ENCODE measurements at regions of chr11 and their contacts with region 1.

Region 1: DNA sequence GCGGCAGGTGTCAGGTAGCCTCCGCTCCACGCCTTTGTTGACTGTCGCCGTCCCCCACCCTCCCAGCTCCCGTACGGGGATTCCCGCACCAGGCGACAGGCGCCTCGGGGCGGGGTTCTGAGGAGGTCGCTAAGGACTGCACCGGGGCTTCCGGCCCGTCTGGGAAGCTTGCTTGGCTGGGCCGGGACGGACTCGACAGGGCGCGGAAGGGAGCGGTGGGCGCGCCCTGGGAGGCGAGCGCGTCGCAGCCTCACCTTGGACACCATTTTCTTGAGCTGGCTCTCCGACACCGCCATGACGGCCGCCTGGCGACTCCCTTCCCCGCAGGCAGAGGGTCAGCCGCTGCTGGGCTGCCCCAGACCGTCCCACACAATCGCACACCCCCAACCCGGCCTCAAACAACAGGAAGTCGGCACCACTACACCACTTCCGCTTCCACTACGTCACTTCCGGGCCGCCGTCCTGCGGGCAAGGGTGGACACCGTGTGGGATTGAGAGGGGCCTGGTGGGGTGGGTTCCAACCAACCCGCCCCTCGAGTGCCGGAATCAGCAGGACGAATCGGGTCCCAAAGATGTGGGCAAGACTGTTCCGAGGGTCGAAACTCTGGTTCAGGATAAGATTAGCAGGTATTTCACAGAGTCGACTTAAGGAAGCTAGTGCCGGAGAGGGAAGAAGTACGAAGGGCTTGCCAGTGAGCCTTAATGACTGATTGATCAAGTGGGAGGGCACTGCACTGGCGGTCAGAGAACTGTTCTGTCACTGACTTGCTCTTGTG is at the start of gene TSG101:
- DNase-seq: peak; percentile 86 to 96 (median 91)
- ATAC-seq: peak; percentile 91
- H3K4me3 ChIP-seq: peak within 1 kb of the TSS; percentile 94
- H3K4me3 Mint-ChIP-seq: peak within 1 kb of the TSS; percentile 93 to 100 (median 100)
- H3K27ac ChIP-seq: peak within 1 kb of the TSS; percentile 96
- H3K27ac Mint-ChIP-seq: peak within 1 kb of the TSS; percentile 99 to 100 (median 100)
- H3K4me1 ChIP-seq: peaks cover 18% of the 10 kb centered on the region in 2 donors
- H3K4me1 Mint-ChIP-seq: peaks cover 28 to 67% (median 55%) of the 10 kb centered on the region in 7 donors
- H3K27me3 ChIP-seq: no peaks in the 10 kb centered on the region
- H3K27me3 Mint-ChIP-seq: peaks cover 0 to 3% (median 0%) of the 10 kb centered on the region in 5 donors
- total RNA-seq, gene TSG101: 16.8 to 46.3 (median 36.3) TPM

Region 2: GRCh38 chr11:16738193-16738946 is 1788.3 kb before region 1 on chr11 and contains the start of gene C11orf58:
- CTCF ChIA-PET with region 1: no interaction called
- POLR2A ChIA-PET with region 1: no interaction called
- intact Hi-C with region 1: loop called in 1 of 2 experiments (anchors 5 kb)
- DNase-seq: peak; percentile 87 to 98 (median 97)
- ATAC-seq: peak; percentile 97
- H3K4me3 ChIP-seq: peak within 1 kb of the TSS; percentile 92
- H3K4me3 Mint-ChIP-seq: peak within 1 kb of the TSS in 5 of 10 donors; percentile 72 to 87 (median 77)
- H3K27ac ChIP-seq: peak within 1 kb of the TSS; percentile 98
- H3K27ac Mint-ChIP-seq: peak within 1 kb of the TSS in 2 of 9 donors; percentile 83 to 97
- H3K4me1 ChIP-seq: peaks cover 28 to 33% of the 10 kb centered on the region in 2 donors
- H3K4me1 Mint-ChIP-seq: peaks cover 6 to 32% (median 21%) of the 10 kb centered on the region in 7 donors
- H3K27me3 ChIP-seq: no peaks in the 10 kb centered on the region
- H3K27me3 Mint-ChIP-seq: peaks cover 0 to 3% (median 0%) of the 10 kb centered on the region in 5 donors
- total RNA-seq, gene C11orf58: 116 to 168 (median 155) TPM

Region 3: DNA sequence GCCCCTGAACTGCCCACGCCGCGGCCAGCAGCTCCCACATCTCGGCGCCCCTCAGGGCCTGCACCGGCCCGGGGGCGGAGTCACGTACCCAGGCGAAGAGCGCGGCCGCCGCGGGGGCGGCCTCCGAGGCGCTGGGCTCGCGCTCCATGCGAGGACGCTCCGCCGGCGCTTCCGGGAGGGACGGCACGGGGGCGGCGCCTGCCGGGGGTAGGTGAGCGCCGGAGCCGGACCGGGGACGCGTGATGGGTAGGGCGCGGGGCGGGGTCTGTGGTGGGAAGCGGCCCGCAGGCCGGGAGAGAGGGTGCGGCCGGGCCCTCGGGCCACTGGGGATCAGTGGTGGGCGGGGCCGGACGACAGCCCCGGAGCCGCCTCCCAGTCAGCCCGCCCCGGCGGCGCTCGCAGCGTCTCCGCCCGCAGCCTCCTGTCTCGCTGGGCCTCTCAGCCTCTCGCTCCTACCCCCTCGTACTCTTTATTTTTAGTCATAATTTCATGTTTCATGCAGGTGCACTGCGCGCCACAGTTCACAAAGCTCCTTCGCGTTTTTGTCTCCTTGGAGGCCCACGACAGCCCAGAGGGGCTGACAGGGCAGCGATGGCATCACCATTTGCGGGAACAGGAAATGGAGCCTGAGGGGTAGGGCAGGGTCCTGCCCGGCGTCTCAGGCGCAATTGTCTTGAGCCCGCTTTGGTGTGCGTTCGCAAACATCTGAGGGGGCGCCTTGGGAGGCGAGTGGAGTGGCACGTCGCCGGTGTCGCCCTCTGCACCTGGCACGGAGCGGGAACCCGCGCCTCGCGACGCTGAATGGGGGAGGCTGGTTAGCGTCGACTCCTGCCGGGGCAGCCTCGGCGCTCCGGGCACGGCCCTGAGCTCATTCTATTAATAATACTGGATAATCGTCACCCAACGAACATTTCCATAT is 513.6 kb before region 1 on chr11 and contains the start of gene SERGEF:
- CTCF ChIA-PET with region 1: interaction called, 4 read pairs
- POLR2A ChIA-PET with region 1: interaction called, 4 read pairs
- intact Hi-C with region 1: loop called (anchors 1 kb)
- DNase-seq: peak; percentile 81 to 96 (median 87)
- ATAC-seq: peak; percentile 93
- H3K4me3 ChIP-seq: peak within 1 kb of the TSS; percentile 85
- H3K4me3 Mint-ChIP-seq: peak within 1 kb of the TSS; percentile 93 to 100 (median 98)
- H3K27ac ChIP-seq: peak within 1 kb of the TSS; percentile 84
- H3K27ac Mint-ChIP-seq: peak within 1 kb of the TSS; percentile 89 to 99 (median 99)
- H3K4me1 ChIP-seq: peaks cover 10% of the 10 kb centered on the region in 2 donors
- H3K4me1 Mint-ChIP-seq: peaks cover 17 to 47% (median 37%) of the 10 kb centered on the region in 7 donors
- H3K27me3 ChIP-seq: no peaks in the 10 kb centered on the region
- H3K27me3 Mint-ChIP-seq: no peaks in the 10 kb centered on the region
- total RNA-seq, gene SERGEF: 35.0 to 57.7 (median 52.9) TPM

Region 4: DNA sequence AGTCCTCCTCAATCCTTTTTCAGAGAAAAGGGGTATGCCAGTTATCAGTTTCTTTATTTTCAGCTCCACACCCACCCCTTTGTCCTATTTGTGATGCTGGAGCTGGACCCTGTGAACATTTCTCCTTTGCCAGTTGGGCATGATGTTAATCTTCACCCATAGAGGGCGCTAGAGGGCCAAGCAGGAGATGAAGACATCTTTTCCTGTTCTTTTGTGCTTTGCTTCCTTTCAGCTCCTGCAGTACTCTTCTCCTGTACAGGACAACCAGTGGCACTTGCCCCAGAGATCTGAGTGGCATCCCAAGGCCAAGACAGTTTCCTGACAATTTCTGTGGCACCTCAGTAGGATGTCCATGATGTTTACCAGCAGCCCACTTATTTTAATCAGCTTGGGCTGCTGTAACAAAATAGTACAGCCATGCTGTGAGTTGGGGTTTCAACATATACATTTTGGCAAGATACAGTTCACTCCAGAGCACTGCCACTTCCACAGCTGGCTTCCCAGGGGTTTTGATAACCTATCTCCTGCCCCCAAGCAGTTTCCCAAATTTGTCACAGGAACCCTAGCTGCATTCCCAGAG is 282.8 kb before region 1 on chr11:
- CTCF ChIA-PET with region 1: no interaction called
- POLR2A ChIA-PET with region 1: no interaction called
- intact Hi-C with region 1: loop called in 1 of 2 experiments (anchors 2 kb)
- DNase-seq: peak in 8 of 9 donors; percentile 15 to 63 (median 50)
- ATAC-seq: peak; percentile 80
- H3K4me3 ChIP-seq: no peak overlapping the region
- H3K4me3 Mint-ChIP-seq: no peak overlapping the region
- H3K27ac ChIP-seq: no peak overlapping the region
- H3K27ac Mint-ChIP-seq: no peak overlapping the region
- H3K4me1 ChIP-seq: no peaks in the 10 kb centered on the region
- H3K4me1 Mint-ChIP-seq: peaks cover 0 to 32% (median 0%) of the 10 kb centered on the region in 7 donors
- H3K27me3 ChIP-seq: no peaks in the 10 kb centered on the region
- H3K27me3 Mint-ChIP-seq: peaks cover 6 to 37% (median 16%) of the 10 kb centered on the region in 5 donors

Region 5: DNA sequence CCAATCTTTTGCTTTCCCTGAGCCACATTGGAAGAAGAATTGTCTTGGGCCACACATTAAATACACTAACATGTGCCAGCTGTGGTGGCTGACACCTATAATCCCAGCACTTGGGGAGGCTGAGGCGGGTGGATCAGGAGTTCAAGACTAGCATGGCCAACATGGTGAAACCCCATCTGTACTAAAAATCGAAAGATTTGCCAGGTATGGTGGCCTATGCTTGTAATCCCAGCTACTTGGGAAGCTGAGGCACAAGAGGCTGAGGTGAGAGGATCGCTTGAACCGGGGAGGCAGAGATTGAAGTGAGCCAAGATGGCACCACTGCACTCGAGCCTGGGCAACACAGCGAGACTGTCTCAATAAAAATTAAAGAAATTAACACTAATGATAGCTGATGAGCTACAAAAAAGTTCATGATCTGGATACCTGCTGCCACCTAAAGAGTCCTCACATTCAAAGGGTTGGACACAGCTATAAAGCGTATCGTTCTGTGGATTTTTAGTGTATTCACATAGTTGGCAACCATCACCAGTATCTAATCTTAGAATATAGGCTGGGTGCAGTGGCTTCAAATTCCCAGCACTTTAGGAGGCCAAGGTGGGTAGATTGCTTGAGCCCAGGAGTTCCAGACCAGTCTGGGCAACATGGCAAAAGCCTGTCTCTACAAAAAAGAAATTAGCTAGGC is 118.0 kb before region 1 on chr11:
- CTCF ChIA-PET with region 1: interaction called, 3 read pairs
- POLR2A ChIA-PET with region 1: no interaction called
- intact Hi-C with region 1: loop called in 1 of 2 experiments (anchors 5 kb)
- DNase-seq: no peak
- ATAC-seq: peak; percentile 39
- H3K4me3 ChIP-seq: no peak overlapping the region
- H3K4me3 Mint-ChIP-seq: no peak overlapping the region
- H3K27ac ChIP-seq: no peak overlapping the region
- H3K27ac Mint-ChIP-seq: no peak overlapping the region
- H3K4me1 ChIP-seq: no peaks in the 10 kb centered on the region
- H3K4me1 Mint-ChIP-seq: peaks cover 5 to 22% (median 12%) of the 10 kb centered on the region in 7 donors
- H3K27me3 ChIP-seq: no peaks in the 10 kb centered on the region
- H3K27me3 Mint-ChIP-seq: no peaks in the 10 kb centered on the region

Region 6: DNA sequence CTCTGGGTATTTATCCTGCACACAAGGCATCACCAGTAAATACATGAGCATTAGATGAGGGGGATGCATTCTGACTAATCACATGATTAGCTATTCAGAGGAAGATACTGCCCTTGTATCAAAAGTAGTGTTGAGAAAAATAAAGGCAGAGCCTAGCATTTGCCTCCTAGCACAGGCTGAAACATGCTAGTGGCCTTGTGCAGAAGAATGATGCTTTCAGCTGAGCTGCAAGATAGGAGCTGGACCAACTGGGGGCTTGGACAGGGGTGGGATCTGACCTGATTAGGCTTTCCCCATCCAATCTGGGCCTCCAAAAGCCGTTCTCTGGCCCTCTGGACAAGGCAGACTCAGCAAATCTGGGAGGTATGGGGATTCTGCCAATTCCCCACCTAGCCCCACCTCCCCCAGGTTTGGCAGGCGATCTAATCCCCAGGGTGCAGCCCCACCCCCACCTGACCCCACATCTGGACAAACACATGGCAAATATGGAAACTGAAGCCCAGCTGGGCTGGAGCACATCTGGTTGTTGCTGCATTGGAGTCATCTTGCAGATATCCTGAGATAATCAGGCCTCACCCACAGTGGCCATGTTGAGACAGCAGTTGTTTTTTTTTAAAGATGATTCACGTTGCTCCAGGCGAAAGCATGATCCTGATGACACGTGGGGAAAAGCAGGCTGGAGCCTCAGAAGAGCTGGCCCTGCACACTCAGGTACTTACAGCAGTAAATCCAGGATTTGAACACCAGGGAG is 68.5 kb after region 1 on chr11:
- CTCF ChIA-PET with region 1: no interaction called
- POLR2A ChIA-PET with region 1: no interaction called
- intact Hi-C with region 1: no loop called
- DNase-seq: no peak
- ATAC-seq: no peak
- H3K4me3 ChIP-seq: no peak overlapping the region
- H3K4me3 Mint-ChIP-seq: no peak overlapping the region
- H3K27ac ChIP-seq: no peak overlapping the region
- H3K27ac Mint-ChIP-seq: no peak overlapping the region
- H3K4me1 ChIP-seq: peaks cover 0 to 4% of the 10 kb centered on the region in 2 donors
- H3K4me1 Mint-ChIP-seq: peaks cover 0 to 16% (median 0%) of the 10 kb centered on the region in 7 donors
- H3K27me3 ChIP-seq: no peaks in the 10 kb centered on the region
- H3K27me3 Mint-ChIP-seq: no peaks in the 10 kb centered on the region

Region 7: GRCh38 chr11:18615628-18616392 is 89.1 kb after region 1 on chr11:
- CTCF ChIA-PET with region 1: no interaction called
- POLR2A ChIA-PET with region 1: interaction called, 3 read pairs
- intact Hi-C with region 1: loop called in 1 of 2 experiments (anchors 1 kb)
- DNase-seq: no peak
- ATAC-seq: peak; percentile 44
- H3K4me3 ChIP-seq: no peak overlapping the region
- H3K4me3 Mint-ChIP-seq: peak overlapping the region in 1 of 10 donors; percentile 71
- H3K27ac ChIP-seq: no peak overlapping the region
- H3K27ac Mint-ChIP-seq: peak overlapping the region in 3 of 9 donors; percentile 26 to 72 (median 28)
- H3K4me1 ChIP-seq: peaks cover 21 to 29% of the 10 kb centered on the region in 2 donors
- H3K4me1 Mint-ChIP-seq: peaks cover 26 to 59% (median 47%) of the 10 kb centered on the region in 7 donors
- H3K27me3 ChIP-seq: no peaks in the 10 kb centered on the region
- H3K27me3 Mint-ChIP-seq: no peaks in the 10 kb centered on the region

Region 8: GRCh38 chr11:18684267-18684666 is 157.6 kb after region 1 on chr11:
- CTCF ChIA-PET with region 1: no interaction called
- POLR2A ChIA-PET with region 1: no interaction called
- intact Hi-C with region 1: no loop called
- DNase-seq: no peak
- ATAC-seq: no peak
- H3K4me3 ChIP-seq: no peak overlapping the region
- H3K4me3 Mint-ChIP-seq: no peak overlapping the region
- H3K27ac ChIP-seq: no peak overlapping the region
- H3K27ac Mint-ChIP-seq: peak overlapping the region in 1 of 9 donors; percentile 16
- H3K4me1 ChIP-seq: peaks cover 0 to under 1% of the 10 kb centered on the region in 2 donors
- H3K4me1 Mint-ChIP-seq: peaks cover 0 to 9% (median 5%) of the 10 kb centered on the region in 7 donors
- H3K27me3 ChIP-seq: no peaks in the 10 kb centered on the region
- H3K27me3 Mint-ChIP-seq: peaks cover 0 to 15% (median 0%) of the 10 kb centered on the region in 5 donors

Region 9: DNA sequence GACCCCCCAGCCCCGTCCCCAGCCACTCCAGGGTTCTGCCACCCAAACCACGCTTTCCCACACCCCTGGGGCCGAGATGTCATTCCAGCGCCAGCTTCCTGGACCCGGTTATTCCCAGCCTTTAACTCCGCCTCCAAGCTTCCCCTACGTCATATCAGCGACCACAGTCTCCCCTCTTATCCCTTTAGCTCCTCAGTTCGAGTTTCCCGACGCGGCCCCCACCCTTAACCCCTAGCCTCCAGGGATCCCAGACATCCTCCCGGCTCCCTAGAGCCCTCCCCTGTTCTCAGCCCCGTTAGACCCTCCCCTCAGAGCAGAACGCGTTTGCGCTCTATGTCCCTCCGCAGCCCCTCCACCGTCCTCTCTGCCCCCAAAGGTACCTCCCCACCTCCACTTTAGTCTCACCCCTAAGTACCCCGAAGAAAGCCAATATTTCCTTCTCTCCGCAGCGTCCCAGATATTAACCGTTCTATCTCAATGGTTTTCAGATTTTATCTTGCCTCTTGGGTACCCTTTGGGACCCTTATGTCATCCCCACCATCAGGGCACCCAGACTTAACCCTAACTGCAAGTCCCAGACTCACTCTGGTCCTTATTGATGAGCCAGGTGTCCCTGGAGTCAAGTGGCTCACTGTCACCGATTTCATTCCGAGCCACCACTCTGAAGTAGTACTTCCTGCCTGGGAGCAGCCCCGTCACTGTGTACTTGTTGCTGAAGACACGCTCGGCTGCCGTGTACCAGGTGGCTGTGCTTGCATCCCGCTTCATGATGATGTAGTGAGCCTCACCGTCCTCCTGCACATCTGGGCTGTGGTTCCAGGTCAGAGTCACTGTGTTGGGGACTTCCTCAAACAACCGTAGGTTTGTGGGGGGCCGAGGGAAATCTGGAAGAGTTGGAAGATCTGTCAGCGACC is 179.9 kb after region 1 on chr11:
- CTCF ChIA-PET with region 1: no interaction called
- POLR2A ChIA-PET with region 1: interaction called, 9 read pairs
- intact Hi-C with region 1: loop called in 1 of 2 experiments (anchors 1 kb)
- DNase-seq: peak in 8 of 9 donors; percentile 34 to 73 (median 64)
- ATAC-seq: peak; percentile 83
- H3K4me3 ChIP-seq: peak overlapping the region; percentile 88
- H3K4me3 Mint-ChIP-seq: peak overlapping the region; percentile 90 to 98 (median 93)
- H3K27ac ChIP-seq: peak overlapping the region; percentile 68
- H3K27ac Mint-ChIP-seq: peak overlapping the region; percentile 81 to 98 (median 90)
- H3K4me1 ChIP-seq: peaks cover 9 to 10% of the 10 kb centered on the region in 2 donors
- H3K4me1 Mint-ChIP-seq: peaks cover 15 to 29% (median 25%) of the 10 kb centered on the region in 7 donors
- H3K27me3 ChIP-seq: no peaks in the 10 kb centered on the region
- H3K27me3 Mint-ChIP-seq: peaks cover 0 to 55% (median 0%) of the 10 kb centered on the region in 5 donors